ENCODE measurements at regions of chr17 and their contacts with region 1.

Region 1: GRCh38 chr17:37406635-37407461 is at the starts of genes ACACA and TADA2A:
- DNase-seq: peak; percentile 74
- H3K4me3 Mint-ChIP-seq: peak within 1 kb of the TSS; percentile 97
- H3K27ac Mint-ChIP-seq: peak within 1 kb of the TSS; percentile 95
- H3K4me1 Mint-ChIP-seq: peaks cover 58% of the 10 kb centered on the region
- H3K27me3 Mint-ChIP-seq: no peaks in the 10 kb centered on the region
- total RNA-seq, gene ACACA: 52.6 to 59.8 TPM
- total RNA-seq, gene TADA2A: 27.3 to 29.5 TPM

Region 2: GRCh38 chr17:37358830-37359681 is 47.8 kb before region 1 on chr17:
- CTCF ChIA-PET with region 1: interaction called, 4 read pairs
- intact Hi-C with region 1: loop called (anchors 1 kb)
- DNase-seq: peak; percentile 95
- H3K4me3 Mint-ChIP-seq: peak overlapping the region; percentile 86
- H3K27ac Mint-ChIP-seq: peak overlapping the region; percentile 76
- H3K4me1 Mint-ChIP-seq: peaks cover 21% of the 10 kb centered on the region
- H3K27me3 Mint-ChIP-seq: no peaks in the 10 kb centered on the region

Region 3: GRCh38 chr17:37392024-37392590 is 14.7 kb before region 1 on chr17:
- CTCF ChIA-PET with region 1: no interaction called
- intact Hi-C with region 1: loop called (anchors 2 kb)
- DNase-seq: no peak
- H3K4me3 Mint-ChIP-seq: no peak overlapping the region
- H3K27ac Mint-ChIP-seq: no peak overlapping the region
- H3K4me1 Mint-ChIP-seq: peaks cover 17% of the 10 kb centered on the region
- H3K27me3 Mint-ChIP-seq: no peaks in the 10 kb centered on the region

Region 4: DNA sequence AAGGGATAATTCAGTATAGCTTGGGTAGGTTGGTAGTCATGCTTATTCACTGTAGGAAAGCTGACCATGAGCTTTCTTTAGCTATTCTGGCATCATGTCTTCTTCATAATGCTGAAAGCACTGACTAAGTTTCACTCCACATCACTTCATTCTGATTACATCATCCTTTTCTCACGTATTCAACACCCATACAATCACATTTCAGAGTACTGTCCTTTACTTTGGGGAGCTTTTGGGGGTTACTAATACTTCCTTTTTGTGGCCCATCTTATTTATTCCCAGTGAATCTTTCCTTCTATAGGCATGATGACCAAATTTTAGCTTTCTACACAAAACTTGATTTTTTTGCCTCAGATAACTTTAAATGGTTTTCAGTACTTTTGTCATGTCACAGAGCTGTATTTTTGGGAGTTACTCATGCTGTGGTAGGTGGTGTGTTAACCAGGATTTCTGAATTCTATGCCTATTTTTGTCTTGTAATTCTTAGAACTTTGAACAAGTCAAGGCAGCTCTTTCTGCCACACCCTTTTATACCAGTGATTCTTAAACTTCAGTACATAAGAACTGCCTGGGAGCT is 23.3 kb after region 1 on chr17:
- CTCF ChIA-PET with region 1: interaction called, 4 read pairs
- intact Hi-C with region 1: loop called (anchors 1 kb)
- DNase-seq: no peak
- H3K4me3 Mint-ChIP-seq: peak overlapping the region; percentile 1
- H3K27ac Mint-ChIP-seq: peak overlapping the region; percentile 89
- H3K4me1 Mint-ChIP-seq: peaks cover 23% of the 10 kb centered on the region
- H3K27me3 Mint-ChIP-seq: no peaks in the 10 kb centered on the region

Region 5: DNA sequence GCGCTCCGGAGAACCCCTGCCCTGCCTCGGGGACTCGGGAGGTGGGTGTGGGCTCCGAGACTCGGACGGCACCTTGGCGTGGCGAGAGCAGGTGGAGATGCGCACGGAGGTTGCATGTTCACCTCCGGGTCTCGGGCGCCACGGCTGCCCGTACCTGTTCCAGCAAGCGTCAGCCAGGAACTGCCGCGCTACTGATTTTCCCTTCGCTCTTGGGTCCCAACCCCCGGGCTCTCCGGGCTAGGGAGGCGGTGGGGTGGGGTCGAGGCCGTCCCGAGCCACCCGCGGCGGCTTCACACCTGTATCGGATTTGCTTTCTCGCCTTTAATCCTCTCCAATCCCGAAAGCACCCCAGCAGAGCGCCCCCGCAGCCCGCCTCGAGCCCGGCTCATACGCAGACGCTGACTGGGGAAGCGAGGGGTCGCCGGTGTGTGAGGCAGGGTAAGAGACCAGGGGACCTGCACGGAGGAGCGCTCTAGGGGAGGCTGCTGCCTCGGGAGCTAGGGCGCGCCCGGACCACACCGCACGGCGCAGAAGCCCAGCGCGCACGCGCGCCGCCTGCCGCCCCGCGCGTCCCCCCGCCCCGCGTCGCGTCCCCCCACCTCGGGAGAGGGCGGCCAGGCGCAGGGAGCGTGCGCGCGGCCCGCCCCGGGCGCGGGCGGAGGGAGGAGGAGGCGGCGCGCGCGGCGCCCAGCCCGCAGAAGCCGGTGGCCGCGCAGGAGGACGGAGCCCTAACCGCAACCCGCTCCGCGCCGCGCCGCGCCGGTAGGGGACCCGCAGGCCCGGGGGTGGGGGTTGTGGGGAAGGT is 82.6 kb after region 1 on chr17 and contains the start of gene DUSP14:
- CTCF ChIA-PET with region 1: interaction called, 3 read pairs
- intact Hi-C with region 1: loop called (anchors 2 kb)
- DNase-seq: peak; percentile 71
- H3K4me3 Mint-ChIP-seq: peak within 1 kb of the TSS; percentile 94
- H3K27ac Mint-ChIP-seq: peak within 1 kb of the TSS; percentile 76
- H3K4me1 Mint-ChIP-seq: peaks cover 48% of the 10 kb centered on the region
- H3K27me3 Mint-ChIP-seq: no peaks in the 10 kb centered on the region
- total RNA-seq, gene DUSP14: 7.0 to 7.9 TPM

Region 6: DNA sequence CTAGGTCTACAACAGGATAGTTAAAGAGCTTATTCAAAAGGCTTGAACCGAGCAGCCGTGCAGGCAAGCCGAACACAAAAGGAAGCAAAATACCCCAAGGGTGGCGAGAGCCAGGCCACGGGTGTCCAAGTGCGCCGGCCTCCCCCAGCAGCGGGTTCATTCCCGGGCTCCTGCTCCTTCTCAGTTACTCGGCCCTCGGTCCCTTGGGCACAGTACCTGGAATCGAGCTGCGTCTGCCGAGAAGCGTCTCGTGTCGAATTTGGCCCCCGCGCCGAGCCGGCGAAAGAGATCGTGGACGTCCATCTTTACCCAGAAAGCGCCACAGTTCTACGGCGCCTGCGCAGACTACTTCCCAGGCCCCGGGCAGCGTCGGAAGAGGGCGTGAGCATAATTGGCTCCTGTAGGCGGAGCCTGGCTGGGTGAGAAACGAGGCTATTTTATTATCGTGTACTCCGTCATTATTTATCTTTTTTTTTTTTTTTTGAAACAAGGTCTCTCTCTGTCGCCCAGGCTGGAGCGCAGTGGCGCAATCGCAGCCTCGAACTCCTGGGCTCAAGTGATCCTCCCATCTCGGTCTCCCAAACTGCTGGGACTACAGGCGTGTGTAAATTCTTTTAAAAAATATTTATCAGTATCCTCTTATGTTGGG is 236.4 kb after region 1 on chr17 and contains the start of gene DDX52:
- CTCF ChIA-PET with region 1: no interaction called
- intact Hi-C with region 1: no loop called
- DNase-seq: peak; percentile 93
- H3K4me3 Mint-ChIP-seq: peak within 1 kb of the TSS; percentile 87
- H3K27ac Mint-ChIP-seq: peak within 1 kb of the TSS; percentile 81
- H3K4me1 Mint-ChIP-seq: peaks cover 23% of the 10 kb centered on the region
- H3K27me3 Mint-ChIP-seq: peaks cover 13% of the 10 kb centered on the region
- total RNA-seq, gene DDX52: 18.5 to 20.2 TPM